ENCODE measurements at regions of chr5 and their contacts with region 1.

Region 1: GRCh38 chr5:1840741-1841521 is 39.7 kb downstream of the NDUFS6 start:
- DNase-seq: no peak
- H3K4me3 ChIP-seq: no peak overlapping the region
- H3K27ac ChIP-seq: no peak overlapping the region
- H3K4me1 ChIP-seq: no peaks in the 10 kb centered on the region
- H3K27me3 ChIP-seq: peaks cover 95% of the 10 kb centered on the region
- CTCF ChIP-seq: no peak

Region 2: DNA sequence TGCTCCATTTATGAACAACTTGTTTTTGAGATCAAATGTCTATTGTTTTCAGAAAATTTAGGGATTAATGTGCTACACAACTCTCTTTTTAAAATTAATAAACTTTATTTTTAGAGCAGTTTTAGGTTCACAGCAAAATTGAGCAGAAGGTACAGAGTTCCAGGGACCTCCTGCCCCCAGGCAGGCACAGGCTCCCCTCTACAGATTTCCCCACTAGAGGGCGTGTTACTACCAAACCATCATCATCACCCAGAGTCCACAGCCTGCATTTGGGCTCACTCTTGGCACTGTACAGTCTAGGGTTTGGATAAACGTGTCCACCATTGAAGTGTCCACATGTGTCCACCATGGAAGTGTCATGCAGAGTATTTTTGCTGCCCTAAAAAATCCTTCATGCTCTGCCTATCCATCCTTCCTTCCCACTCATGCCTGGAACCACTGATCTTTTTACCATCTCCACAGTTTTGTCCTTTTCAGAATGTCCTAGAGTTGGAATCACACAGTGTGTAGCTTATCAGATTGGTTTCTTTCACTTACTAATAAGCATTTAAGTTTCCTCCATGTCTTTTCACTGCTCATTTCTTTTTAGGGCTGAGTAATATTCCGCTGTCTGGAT is 103.0 kb before region 1 on chr5:
- CTCF ChIA-PET with region 1: no interaction called
- POLR2A ChIA-PET with region 1: no interaction called
- intact Hi-C with region 1: no loop called
- DNase-seq: peak in 1 of 2 experiments; percentile 34
- H3K4me3 ChIP-seq: no peak overlapping the region
- H3K27ac ChIP-seq: no peak overlapping the region
- H3K4me1 ChIP-seq: no peaks in the 10 kb centered on the region
- H3K27me3 ChIP-seq: peaks cover 92% of the 10 kb centered on the region
- CTCF ChIP-seq: peak; percentile 90

Region 3: GRCh38 chr5:1804001-1804690 is 36.8 kb before region 1 on chr5:
- CTCF ChIA-PET with region 1: no interaction called
- POLR2A ChIA-PET with region 1: interaction called, 12 read pairs
- intact Hi-C with region 1: no loop called
- DNase-seq: no peak
- H3K4me3 ChIP-seq: no peak overlapping the region
- H3K27ac ChIP-seq: no peak overlapping the region
- H3K4me1 ChIP-seq: peaks cover 13% of the 10 kb centered on the region
- H3K27me3 ChIP-seq: no peaks in the 10 kb centered on the region
- CTCF ChIP-seq: no peak

Region 4: DNA sequence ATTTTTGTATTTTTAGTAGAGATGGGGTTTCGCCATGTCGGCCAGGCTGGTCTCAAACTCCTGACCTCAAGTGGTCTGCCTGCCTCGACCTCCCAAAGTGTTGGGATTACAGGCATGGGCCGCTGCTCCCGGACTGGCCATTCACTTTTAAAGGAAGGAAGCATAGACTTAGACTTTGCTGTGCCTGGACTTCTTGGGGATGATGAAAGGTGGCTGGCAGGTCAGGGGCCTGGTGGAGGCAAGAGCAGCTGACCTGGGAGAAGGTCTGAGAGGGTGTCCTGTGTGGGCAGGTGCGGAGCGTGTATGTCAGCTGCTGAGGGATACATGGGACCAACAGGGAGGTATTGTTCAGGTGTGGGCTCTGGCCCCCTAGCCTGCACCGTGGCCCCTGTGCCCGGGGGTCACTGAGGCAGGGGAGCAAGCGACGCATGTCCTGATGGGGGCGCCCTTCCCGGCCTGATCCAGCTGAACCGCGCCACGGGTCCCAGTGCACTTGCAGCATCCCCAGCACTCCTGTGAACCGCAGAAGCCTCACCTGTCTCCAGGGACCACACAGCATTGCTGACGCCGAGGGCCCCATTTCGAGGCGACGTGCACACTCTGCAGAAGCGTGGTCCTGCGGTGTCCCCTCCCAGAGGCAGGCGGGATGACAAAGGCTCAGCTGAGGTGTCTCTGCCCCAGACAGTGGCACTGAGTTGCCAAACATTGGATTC is 16.7 kb before region 1 on chr5:
- CTCF ChIA-PET with region 1: no interaction called
- POLR2A ChIA-PET with region 1: no interaction called
- intact Hi-C with region 1: no loop called
- DNase-seq: no peak
- H3K4me3 ChIP-seq: no peak overlapping the region
- H3K27ac ChIP-seq: no peak overlapping the region
- H3K4me1 ChIP-seq: no peaks in the 10 kb centered on the region
- H3K27me3 ChIP-seq: no peaks in the 10 kb centered on the region
- CTCF ChIP-seq: no peak

Measured in PC-9 (cell line).